Activated CD8-positive, alpha-beta T cell treated with anti-CD3 and anti-CD28 coated beads for 36 hours (primary cell): ENCODE measurements at regions of chr1 and their contacts with region 1.

Region 1: GRCh38 chr1:231528172-231529029 is at the start of gene TSNAX:
- DNase-seq: peak; percentile 92
- ATAC-seq: peak; percentile 96
- H3K4me3 Mint-ChIP-seq: peak within 1 kb of the TSS; percentile 95
- H3K27ac Mint-ChIP-seq: peak within 1 kb of the TSS; percentile 100
- H3K4me1 Mint-ChIP-seq: peaks cover 34% of the 10 kb centered on the region
- H3K27me3 Mint-ChIP-seq: no peaks in the 10 kb centered on the region
- CTCF ChIP-seq: no peak
- total RNA-seq, gene TSNAX: 37.6 to 38.0 TPM

Region 2: DNA sequence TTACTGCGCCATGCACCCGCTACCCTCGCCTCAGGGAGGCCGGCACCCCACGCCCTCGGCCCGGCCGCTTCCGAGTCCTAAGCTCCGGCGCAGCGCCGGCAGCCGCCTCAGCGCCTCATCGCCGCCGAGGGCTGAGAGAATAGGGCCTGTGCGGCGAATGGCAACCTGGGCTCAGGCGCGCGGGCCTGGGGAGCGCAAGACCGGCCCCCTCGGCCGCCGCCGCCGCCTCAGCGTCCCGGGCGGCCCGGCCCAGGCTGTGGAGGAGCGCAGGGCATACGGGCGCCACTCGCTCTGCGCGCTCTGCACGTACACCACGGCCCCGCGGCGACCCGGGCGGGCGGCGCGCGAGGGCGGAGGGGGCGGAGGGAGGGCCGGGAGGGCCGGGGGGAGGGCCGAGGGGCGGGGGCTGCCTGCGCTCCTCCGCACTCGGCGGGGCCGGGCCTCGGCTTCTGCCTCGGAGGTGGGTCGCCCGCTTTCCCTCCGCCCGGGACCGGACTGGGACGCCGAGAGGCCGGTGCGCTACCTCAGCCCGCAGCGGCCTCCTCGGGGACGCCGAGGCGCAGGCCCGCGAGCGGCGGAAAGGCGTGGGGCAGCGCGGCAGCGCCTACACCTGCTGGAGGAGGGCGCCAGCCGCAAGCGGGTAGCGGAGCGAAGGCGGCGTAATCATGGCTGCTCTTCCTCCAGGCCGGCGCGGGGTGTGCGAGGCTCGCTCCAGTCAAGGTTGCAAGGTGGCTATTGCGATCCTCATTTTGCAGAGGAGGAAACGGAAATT is 106.2 kb before region 1 on chr1 and contains the start of gene EGLN1:
- CTCF ChIA-PET with region 1: interaction called, 3 read pairs
- POLR2A ChIA-PET with region 1: interaction called, 3 read pairs
- intact Hi-C with region 1: loop called (anchors 5 kb)
- DNase-seq: peak; percentile 84
- ATAC-seq: peak; percentile 83
- H3K4me3 Mint-ChIP-seq: peak within 1 kb of the TSS; percentile 94
- H3K27ac Mint-ChIP-seq: peak within 1 kb of the TSS; percentile 92
- H3K4me1 Mint-ChIP-seq: peaks cover 30% of the 10 kb centered on the region
- H3K27me3 Mint-ChIP-seq: peaks cover 4% of the 10 kb centered on the region
- CTCF ChIP-seq: no peak
- total RNA-seq, gene EGLN1: 46.5 to 47.2 TPM

Region 3: DNA sequence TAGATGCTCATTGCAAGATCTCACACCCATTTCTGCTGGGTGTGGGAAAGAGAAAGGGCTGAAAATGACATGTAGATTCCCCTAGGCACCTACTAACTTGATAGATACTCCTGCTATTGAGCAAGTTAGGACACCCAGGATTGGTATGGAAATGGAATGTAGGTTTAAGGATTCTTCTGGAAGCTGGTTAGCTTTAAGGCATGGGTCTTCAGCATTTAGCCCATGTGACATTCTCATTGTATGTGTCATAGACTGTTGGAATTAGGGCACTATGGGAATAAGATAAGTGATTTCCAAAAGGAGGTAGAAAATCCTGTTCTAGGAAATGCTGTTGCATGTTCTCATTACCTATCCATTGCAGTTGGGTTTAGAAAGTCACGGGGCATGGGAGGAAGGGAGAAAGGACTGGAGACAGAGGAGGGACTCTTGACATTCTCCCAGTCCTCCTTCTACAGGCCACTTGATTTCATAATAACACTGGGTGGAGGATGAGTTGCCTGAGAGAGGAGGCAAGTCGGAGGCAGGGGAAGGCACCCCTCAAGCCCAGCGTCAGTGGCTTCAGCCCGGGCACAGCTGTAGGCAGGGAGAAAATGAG is 174.5 kb after region 1 on chr1:
- CTCF ChIA-PET with region 1: no interaction called
- POLR2A ChIA-PET with region 1: no interaction called
- intact Hi-C with region 1: no loop called
- DNase-seq: no peak
- ATAC-seq: no peak
- H3K4me3 Mint-ChIP-seq: no peak overlapping the region
- H3K27ac Mint-ChIP-seq: no peak overlapping the region
- H3K4me1 Mint-ChIP-seq: peaks cover 10% of the 10 kb centered on the region
- H3K27me3 Mint-ChIP-seq: no peaks in the 10 kb centered on the region
- CTCF ChIP-seq: no peak